ENCODE measurements at regions of chr4 and their contacts with region 1.

Region 1: GRCh38 chr4:104941661-104942062 is 205.0 kb upstream of the TET2 start:
- DNase-seq: no peak
- H3K4me3 Mint-ChIP-seq: no peak overlapping the region
- H3K27ac Mint-ChIP-seq: no peak overlapping the region
- H3K4me1 Mint-ChIP-seq: peaks cover 23% of the 10 kb centered on the region
- H3K27me3 Mint-ChIP-seq: peaks cover 3% of the 10 kb centered on the region

Region 2: GRCh38 chr4:104879367-104879766 is 62.3 kb before region 1 on chr4:
- intact Hi-C with region 1: loop called (anchors 5 kb)
- DNase-seq: no peak
- H3K4me3 Mint-ChIP-seq: peak overlapping the region; percentile 56
- H3K27ac Mint-ChIP-seq: no peak overlapping the region
- H3K4me1 Mint-ChIP-seq: peaks cover 8% of the 10 kb centered on the region
- H3K27me3 Mint-ChIP-seq: peaks cover 6% of the 10 kb centered on the region

Measured in activated T-helper 1 cell treated with anti-CD3 and anti-CD28 coated beads, Interleukin-12 subunit alpha, Interleukin-12 subunit beta, Interleukin-2, Interleukin-4 antibody, amounts not matched to agents 30 ng/mL and 10 ng/mL and 1 ng/mL, durations not matched to agents 14 hours and 24 hours and 36 hours (primary cell).